H1 (cell line): ENCODE measurements at regions of chr1 and their contacts with region 1.

Region 1: DNA sequence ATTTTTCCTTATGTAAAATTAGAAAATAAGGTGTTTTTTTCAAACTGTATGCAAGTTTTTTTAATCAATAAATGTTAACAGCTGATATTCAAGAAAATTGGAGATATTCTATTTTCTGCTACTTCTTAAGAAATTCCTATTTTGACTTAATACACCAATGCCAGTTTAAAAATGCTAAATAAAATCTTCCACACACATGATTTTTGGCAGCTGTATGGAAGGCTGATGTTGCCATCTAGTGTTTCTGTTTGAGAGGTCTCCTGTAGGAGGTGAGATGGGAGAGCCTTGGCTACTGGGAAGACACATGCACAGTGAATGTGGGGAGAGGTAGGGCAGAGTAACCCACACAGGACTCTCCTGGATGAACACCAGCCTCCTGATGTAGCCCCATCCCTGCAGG is 29.2 kb upstream of the OR2B11 start:
- DNase-seq: peak in 1 of 2 experiments; percentile 48
- H3K4me3 ChIP-seq: no peak overlapping the region
- H3K27ac ChIP-seq: no peak overlapping the region
- H3K4me1 ChIP-seq: no peaks in the 10 kb centered on the region
- H3K27me3 ChIP-seq: no peaks in the 10 kb centered on the region
- CTCF ChIP-seq: peak in 2 of 3 experiments; percentile 63 to 70; a peak in 3 of 4 replicates
- EP300 ChIP-seq: no peak
- POLR2A ChIP-seq: no peak
- RAD21 ChIP-seq: peak; percentile 91 to 92

Region 2: GRCh38 chr1:247475793-247476192 is 11.3 kb before region 1 on chr1:
- CTCF ChIA-PET with region 1: interaction called, 10 read pairs
- POLR2A ChIA-PET with region 1: no interaction called
- DNase-seq: no peak
- H3K4me3 ChIP-seq: no peak overlapping the region
- H3K27ac ChIP-seq: no peak overlapping the region
- H3K4me1 ChIP-seq: peaks cover 0 to 11% (median 2%) of the 10 kb centered on the region in 4 experiments; a peak in 4 of 7 replicates
- H3K27me3 ChIP-seq: no peaks in the 10 kb centered on the region
- CTCF ChIP-seq: no peak
- EP300 ChIP-seq: no peak
- POLR2A ChIP-seq: no peak
- RAD21 ChIP-seq: no peak